Caco-2 (cell line): ENCODE measurements at regions of chr11 and their contacts with region 1.

Region 1: GRCh38 chr11:113664069-113664980 is 41.8 kb downstream of the TMPRSS5 start:
- DNase-seq: peak; percentile 77 to 86
- H3K4me3 ChIP-seq: peak overlapping the region; percentile 19
- H3K4me3 Mint-ChIP-seq: peak overlapping the region; percentile 69
- H3K27ac Mint-ChIP-seq: peak overlapping the region; percentile 99
- H3K4me1 ChIP-seq: peaks cover 63% of the 10 kb centered on the region
- H3K4me1 Mint-ChIP-seq: peaks cover 42% of the 10 kb centered on the region
- H3K27me3 ChIP-seq: no peaks in the 10 kb centered on the region
- H3K27me3 Mint-ChIP-seq: no peaks in the 10 kb centered on the region
- CTCF ChIP-seq: no peak

Region 2: GRCh38 chr11:113540416-113541330 is 123.7 kb before region 1 on chr11:
- CTCF ChIA-PET with region 1: interaction called, 4 read pairs
- POLR2A ChIA-PET with region 1: interaction called, 4 read pairs
- intact Hi-C with region 1: loop called (anchors 1 kb)
- DNase-seq: no peak
- H3K4me3 ChIP-seq: no peak overlapping the region
- H3K4me3 Mint-ChIP-seq: no peak overlapping the region
- H3K27ac Mint-ChIP-seq: peak overlapping the region; percentile 40
- H3K4me1 ChIP-seq: peaks cover 35% of the 10 kb centered on the region
- H3K4me1 Mint-ChIP-seq: peaks cover 43% of the 10 kb centered on the region
- H3K27me3 ChIP-seq: no peaks in the 10 kb centered on the region
- H3K27me3 Mint-ChIP-seq: no peaks in the 10 kb centered on the region
- CTCF ChIP-seq: peak; percentile 9 to 26

Region 3: GRCh38 chr11:113553235-113553634 is 111.1 kb before region 1 on chr11:
- CTCF ChIA-PET with region 1: no interaction called
- POLR2A ChIA-PET with region 1: no interaction called
- intact Hi-C with region 1: loop called (anchors 2 kb)
- DNase-seq: peak in 1 of 2 experiments; percentile 47
- H3K4me3 ChIP-seq: no peak overlapping the region
- H3K4me3 Mint-ChIP-seq: peak overlapping the region; percentile 12
- H3K27ac Mint-ChIP-seq: peak overlapping the region; percentile 46
- H3K4me1 ChIP-seq: peaks cover 55% of the 10 kb centered on the region
- H3K4me1 Mint-ChIP-seq: peaks cover 45% of the 10 kb centered on the region
- H3K27me3 ChIP-seq: no peaks in the 10 kb centered on the region
- H3K27me3 Mint-ChIP-seq: no peaks in the 10 kb centered on the region
- CTCF ChIP-seq: no peak

Region 4: DNA sequence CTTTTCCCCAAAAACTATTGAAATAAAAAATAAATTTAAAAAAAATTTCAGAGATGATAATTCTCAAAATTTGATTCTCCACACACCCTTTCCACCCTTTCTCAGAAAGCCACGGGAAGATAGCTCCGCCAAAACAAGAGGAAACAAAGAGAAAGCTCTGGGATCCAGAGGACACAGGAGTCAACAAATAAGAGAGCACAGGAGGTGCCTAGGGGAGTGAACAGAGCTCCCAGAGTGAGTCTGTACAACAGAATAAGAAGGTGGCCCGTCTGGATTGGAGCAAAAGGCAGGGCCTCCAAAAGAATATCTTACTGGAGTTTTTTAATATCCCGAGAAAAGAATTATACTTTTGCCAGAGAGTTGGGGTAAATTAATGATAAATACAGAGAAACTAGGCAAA is 92.8 kb before region 1 on chr11:
- CTCF ChIA-PET with region 1: no interaction called
- POLR2A ChIA-PET with region 1: no interaction called
- intact Hi-C with region 1: loop called (anchors 1 kb)
- DNase-seq: no peak
- H3K4me3 ChIP-seq: no peak overlapping the region
- H3K4me3 Mint-ChIP-seq: no peak overlapping the region
- H3K27ac Mint-ChIP-seq: peak overlapping the region; percentile 65
- H3K4me1 ChIP-seq: peaks cover 59% of the 10 kb centered on the region
- H3K4me1 Mint-ChIP-seq: peaks cover 42% of the 10 kb centered on the region
- H3K27me3 ChIP-seq: no peaks in the 10 kb centered on the region
- H3K27me3 Mint-ChIP-seq: no peaks in the 10 kb centered on the region
- CTCF ChIP-seq: no peak

Region 5: DNA sequence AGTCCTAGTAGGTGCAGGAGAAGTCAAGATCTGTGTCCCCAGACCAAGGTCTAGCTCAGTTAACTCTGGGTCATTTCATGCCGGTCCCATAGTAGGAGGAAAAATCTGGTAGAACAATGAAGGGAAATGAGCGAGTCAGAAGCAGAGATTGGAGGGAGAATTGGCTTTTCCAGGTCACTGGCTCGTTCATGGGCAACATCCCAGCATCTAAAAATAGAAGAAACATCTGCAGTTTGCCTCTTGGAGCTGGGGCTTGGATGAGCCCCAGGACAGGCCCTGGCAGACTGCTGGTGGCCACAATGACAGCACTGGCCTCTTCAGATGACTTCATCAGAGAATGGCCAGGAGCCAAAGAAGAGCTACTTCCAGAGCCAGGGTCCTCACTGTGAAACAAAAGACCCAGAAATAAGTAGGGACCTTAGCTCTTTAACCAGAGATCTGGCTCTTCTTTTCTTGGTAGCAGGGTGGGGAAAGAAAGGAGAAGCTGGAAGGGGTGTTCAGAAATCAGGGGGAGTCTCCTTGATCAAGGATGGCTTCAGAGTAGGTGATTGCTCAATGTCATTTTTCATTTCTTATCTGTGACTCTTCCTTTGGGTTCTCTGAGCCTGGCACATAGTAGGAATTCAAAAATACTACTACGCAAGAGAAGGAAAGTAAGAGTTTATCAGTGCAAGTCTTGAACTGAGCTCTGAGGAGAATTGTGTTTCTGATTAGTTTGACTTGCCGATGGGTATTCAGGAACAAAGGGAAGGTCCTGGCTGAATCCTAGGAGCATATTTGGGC is 60.9 kb before region 1 on chr11:
- CTCF ChIA-PET with region 1: no interaction called
- POLR2A ChIA-PET with region 1: no interaction called
- intact Hi-C with region 1: no loop called
- DNase-seq: no peak
- H3K4me3 ChIP-seq: no peak overlapping the region
- H3K4me3 Mint-ChIP-seq: no peak overlapping the region
- H3K27ac Mint-ChIP-seq: peak overlapping the region; percentile 86
- H3K4me1 ChIP-seq: peaks cover 20% of the 10 kb centered on the region
- H3K4me1 Mint-ChIP-seq: peaks cover 18% of the 10 kb centered on the region
- H3K27me3 ChIP-seq: no peaks in the 10 kb centered on the region
- H3K27me3 Mint-ChIP-seq: no peaks in the 10 kb centered on the region
- CTCF ChIP-seq: no peak

Region 6: DNA sequence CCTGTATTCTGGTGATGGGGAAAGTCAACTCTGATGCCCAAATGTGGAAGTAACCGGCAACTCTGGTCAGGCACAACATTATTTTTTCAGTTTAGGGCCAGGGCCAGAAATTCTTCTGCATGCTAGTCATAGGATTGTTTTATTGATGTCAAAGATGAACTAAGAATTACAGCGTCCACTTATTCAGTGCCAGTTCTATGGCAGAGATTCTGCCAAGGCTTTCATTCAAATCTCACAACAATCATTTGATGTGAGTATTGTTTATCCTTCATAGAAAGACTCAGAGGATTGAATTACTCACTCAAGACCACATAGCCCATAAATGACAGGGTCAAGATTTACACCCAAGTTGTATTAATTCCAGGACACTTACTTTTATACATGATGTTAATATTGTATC is 46.0 kb before region 1 on chr11:
- CTCF ChIA-PET with region 1: no interaction called
- POLR2A ChIA-PET with region 1: no interaction called
- intact Hi-C with region 1: no loop called
- DNase-seq: no peak
- H3K4me3 ChIP-seq: no peak overlapping the region
- H3K4me3 Mint-ChIP-seq: no peak overlapping the region
- H3K27ac Mint-ChIP-seq: no peak overlapping the region
- H3K4me1 ChIP-seq: peaks cover 9% of the 10 kb centered on the region
- H3K4me1 Mint-ChIP-seq: peaks cover 21% of the 10 kb centered on the region
- H3K27me3 ChIP-seq: no peaks in the 10 kb centered on the region
- H3K27me3 Mint-ChIP-seq: no peaks in the 10 kb centered on the region
- CTCF ChIP-seq: no peak

Region 7: DNA sequence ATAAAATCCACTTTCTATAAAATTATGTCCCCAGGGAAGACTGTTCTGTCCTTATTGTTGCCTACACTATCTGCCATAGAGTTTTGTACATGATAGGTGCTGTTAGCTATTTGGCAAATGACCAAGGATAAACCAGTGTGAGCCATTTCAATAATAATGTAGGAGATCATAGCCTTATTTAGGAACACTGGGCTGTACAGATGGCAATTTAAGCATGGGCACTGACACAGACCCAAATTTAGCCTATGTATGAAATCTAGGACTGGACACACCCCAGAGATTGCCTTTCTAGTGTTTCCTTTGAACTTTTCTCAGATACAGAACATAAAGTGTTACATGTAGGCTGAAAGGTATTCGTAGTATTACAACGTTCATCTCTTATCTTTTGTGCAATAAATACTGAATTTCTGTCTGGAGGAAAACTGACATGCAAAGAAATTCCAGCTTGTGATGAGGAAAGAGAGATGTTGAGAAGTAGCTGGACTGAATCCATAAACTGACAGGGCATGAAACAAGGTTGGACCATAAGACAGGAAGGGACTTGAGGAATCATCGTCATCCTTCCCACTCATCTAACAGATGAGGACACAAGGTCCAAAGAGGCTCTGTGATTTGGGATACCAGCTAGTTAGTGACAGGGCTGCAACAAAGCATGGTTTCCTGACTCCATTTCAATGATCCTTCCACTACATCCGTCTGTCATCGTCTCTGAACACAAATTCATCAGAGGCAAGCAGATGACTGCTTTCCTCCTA is 18.6 kb before region 1 on chr11:
- CTCF ChIA-PET with region 1: no interaction called
- POLR2A ChIA-PET with region 1: no interaction called
- intact Hi-C with region 1: loop called (anchors 1 kb)
- DNase-seq: no peak
- H3K4me3 ChIP-seq: no peak overlapping the region
- H3K4me3 Mint-ChIP-seq: no peak overlapping the region
- H3K27ac Mint-ChIP-seq: peak overlapping the region; percentile 24
- H3K4me1 ChIP-seq: peaks cover 31% of the 10 kb centered on the region
- H3K4me1 Mint-ChIP-seq: peaks cover 35% of the 10 kb centered on the region
- H3K27me3 ChIP-seq: no peaks in the 10 kb centered on the region
- H3K27me3 Mint-ChIP-seq: no peaks in the 10 kb centered on the region
- CTCF ChIP-seq: no peak